Activated naive CD4-positive, alpha-beta T cell treated with anti-CD3 and anti-CD28 coated beads for 36 hours (primary cell): ENCODE measurements at regions of chr2 and their contacts with region 1.

Region 1: DNA sequence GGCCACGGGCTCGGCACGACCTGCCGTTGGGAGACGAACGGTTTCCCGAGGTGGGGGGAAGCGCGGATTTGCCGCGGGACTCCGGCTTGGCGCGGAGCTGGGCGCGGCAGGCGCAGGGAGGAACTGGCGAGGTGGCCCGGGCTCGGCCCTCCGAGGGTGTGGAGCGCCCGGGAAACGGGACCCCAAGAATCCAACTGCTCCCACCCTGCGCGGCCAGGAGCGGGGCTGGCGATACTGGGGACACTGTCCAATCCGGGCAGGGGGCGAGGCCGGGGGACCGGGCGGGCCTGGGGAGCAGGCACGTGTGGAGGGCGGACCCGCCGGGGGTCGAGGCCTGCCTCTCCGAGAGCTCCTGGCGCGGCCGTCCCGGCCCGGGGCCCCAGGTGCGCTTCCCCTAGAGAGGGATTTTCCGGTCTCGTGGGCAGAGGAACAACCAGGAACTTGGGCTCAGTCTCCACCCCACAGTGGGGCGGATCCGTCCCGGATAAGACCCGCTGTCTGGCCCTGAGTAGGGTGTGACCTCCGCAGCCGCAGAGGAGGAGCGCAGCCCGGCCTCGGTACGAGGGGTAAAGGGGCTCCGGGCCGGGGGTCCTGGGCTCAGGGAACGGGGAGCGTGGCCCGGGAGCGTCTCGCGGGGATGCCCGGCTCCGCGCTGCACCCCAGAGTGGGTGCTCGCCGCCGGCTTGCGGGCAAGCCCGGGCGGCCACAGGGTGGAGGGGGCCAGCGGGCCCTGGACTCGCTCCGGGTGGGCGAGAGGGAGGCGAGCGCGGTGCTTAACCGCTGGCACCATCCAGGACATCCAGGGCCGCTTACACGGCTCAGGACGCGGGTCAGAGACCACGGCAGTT is at the start of gene ANXA4:
- DNase-seq: peak; percentile 78
- H3K4me3 Mint-ChIP-seq: peak within 1 kb of the TSS; percentile 75
- H3K27ac Mint-ChIP-seq: peak within 1 kb of the TSS; percentile 78
- H3K4me1 Mint-ChIP-seq: peaks cover 12% of the 10 kb centered on the region
- H3K27me3 Mint-ChIP-seq: no peaks in the 10 kb centered on the region
- total RNA-seq, gene ANXA4: 21.4 to 23.9 TPM

Region 2: GRCh38 chr2:69770193-69771146 is 28.6 kb after region 1 on chr2:
- CTCF ChIA-PET with region 1: no interaction called
- intact Hi-C with region 1: no loop called
- DNase-seq: no peak
- H3K4me3 Mint-ChIP-seq: no peak overlapping the region
- H3K27ac Mint-ChIP-seq: no peak overlapping the region
- H3K4me1 Mint-ChIP-seq: peaks cover 40% of the 10 kb centered on the region
- H3K27me3 Mint-ChIP-seq: no peaks in the 10 kb centered on the region

Region 3: DNA sequence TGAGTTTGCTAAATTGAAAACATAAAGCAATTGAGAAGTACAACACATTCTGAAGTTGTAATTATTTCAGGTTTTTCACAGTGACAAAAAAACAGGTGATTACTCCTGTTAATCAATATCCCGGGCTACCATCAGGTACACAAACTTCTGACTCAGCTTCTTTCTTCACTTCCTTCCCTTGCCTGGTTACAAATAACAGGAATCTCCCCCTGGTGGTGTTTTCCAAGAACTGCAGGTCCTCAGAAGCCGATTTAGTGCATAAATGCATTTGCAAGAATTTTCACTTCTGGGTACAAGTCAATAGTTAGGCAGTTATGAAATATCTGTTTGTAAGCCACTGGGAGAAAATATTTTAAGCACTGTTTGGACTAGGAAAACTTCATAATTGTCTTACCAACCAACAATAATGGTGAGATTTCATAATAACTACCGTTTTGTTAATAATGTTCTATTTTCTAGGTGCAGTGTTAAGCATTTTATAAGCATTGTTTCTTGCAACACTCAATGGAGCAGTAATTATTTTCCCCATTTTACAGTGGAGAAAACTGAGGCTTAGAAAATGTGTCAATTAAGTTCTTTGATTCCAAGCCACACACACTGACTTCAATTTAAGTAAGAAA is 75.2 kb after region 1 on chr2:
- CTCF ChIA-PET with region 1: interaction called, 9 read pairs
- intact Hi-C with region 1: loop called (anchors 1 kb)
- DNase-seq: peak; percentile 88
- H3K4me3 Mint-ChIP-seq: no peak overlapping the region
- H3K27ac Mint-ChIP-seq: no peak overlapping the region
- H3K4me1 Mint-ChIP-seq: peaks cover 2% of the 10 kb centered on the region
- H3K27me3 Mint-ChIP-seq: no peaks in the 10 kb centered on the region

Region 4: GRCh38 chr2:69837533-69837932 is 95.7 kb after region 1 on chr2:
- CTCF ChIA-PET with region 1: no interaction called
- intact Hi-C with region 1: no loop called
- DNase-seq: no peak
- H3K4me3 Mint-ChIP-seq: no peak overlapping the region
- H3K27ac Mint-ChIP-seq: no peak overlapping the region
- H3K4me1 Mint-ChIP-seq: peaks cover 37% of the 10 kb centered on the region
- H3K27me3 Mint-ChIP-seq: no peaks in the 10 kb centered on the region

Region 5: DNA sequence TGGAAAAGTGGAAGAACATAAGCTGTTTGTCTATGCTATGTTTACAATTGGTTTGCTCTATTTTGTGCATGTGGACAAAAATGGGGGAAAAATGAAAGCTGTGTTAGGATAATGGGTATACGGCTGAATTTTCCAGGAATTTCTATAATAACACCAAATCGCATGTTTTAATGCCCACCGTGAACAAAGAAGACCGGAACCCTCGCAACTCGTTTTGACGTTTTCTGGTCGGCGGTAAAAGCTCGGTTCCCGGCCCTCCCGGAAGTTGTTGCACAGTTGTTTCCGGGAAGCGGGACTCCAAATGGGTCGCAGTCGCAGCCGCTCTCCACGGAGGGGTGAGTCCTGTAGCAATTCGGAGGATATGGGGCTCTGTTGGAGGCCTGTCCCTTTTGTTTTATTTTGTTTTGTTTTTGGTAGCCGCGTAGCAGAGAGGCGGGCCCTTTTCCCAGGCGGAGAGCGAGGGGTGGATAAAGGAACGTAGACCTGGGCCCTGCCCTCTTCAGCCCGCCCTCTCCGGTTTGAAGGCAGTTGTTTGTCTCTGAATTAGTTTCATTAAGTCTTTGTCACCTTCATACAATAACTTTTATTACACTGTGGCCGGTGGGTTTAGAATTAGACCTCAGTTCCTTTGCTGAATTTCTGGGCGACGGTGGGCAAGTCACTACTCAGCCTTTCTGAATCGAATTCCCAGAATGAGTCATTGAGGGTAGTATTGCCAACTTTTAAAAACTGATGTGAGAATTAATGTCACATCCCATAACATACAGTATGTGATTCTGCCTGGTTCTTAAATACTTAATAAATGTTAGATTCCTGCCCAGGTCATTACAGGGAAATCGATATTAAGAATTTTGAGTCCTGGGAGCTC is 152.1 kb after region 1 on chr2 and contains the start of gene SNRNP27:
- CTCF ChIA-PET with region 1: interaction called, 3 read pairs
- intact Hi-C with region 1: loop called (anchors 5 kb)
- DNase-seq: peak; percentile 91
- H3K4me3 Mint-ChIP-seq: peak within 1 kb of the TSS; percentile 98
- H3K27ac Mint-ChIP-seq: peak within 1 kb of the TSS; percentile 97
- H3K4me1 Mint-ChIP-seq: peaks cover 41% of the 10 kb centered on the region
- H3K27me3 Mint-ChIP-seq: no peaks in the 10 kb centered on the region
- total RNA-seq, gene SNRNP27: 56.7 to 64.6 TPM